Gastrocnemius medialis (tissue), 4 donors: ENCODE measurements at regions of chr3 and their contacts with region 1.

Region 1: GRCh38 chr3:172595641-172596393 is 72.6 kb upstream of the TNFSF10 start:
- DNase-seq: no peak
- ATAC-seq: peak; percentile 54 to 81
- H3K4me3 ChIP-seq: peak overlapping the region; percentile 24 to 42 (median 36)
- H3K27ac ChIP-seq: peak overlapping the region; percentile 52 to 81 (median 68)
- H3K4me1 ChIP-seq: peaks cover 13 to 14% of the 10 kb centered on the region in 2 donors
- H3K27me3 ChIP-seq: no peaks in the 10 kb centered on the region
- CTCF ChIP-seq: peak; percentile 53 to 72 (median 58)
- POLR2A ChIP-seq: no peak

Region 2: DNA sequence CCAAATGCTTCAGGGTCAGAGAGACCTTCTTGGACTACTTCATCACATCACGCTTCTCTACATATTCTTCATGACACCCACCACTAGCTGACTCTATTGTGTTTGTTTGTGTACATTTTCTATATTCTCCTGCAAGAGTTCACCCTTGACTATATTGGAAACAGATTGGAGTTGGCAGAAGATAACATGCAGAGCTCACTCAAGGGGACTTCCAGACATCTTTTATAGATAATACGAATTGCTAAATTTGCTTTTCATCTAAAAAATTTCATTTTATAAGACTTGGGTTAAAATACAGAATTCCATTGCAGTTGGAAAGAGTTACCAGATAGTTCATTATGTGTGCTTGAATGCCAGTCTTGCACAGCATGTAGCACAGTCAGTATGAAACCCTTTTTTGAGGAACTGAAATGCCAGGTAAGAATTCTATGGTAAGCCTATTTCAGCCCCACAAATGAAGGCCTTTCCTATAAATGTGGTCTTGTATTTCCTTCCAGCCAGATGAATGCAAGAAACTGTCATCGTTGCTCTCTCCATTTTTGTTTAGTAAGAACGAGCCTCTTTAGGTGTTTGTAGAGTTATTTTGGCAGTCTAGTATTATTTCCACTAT is 325.2 kb before region 1 on chr3:
- in situ Hi-C with region 1: no loop called
- intact Hi-C with region 1: no loop called
- DNase-seq: no peak
- ATAC-seq: no peak
- H3K4me3 ChIP-seq: no peak overlapping the region
- H3K27ac ChIP-seq: no peak overlapping the region
- H3K4me1 ChIP-seq: peaks cover 32% of the 10 kb centered on the region in 2 donors
- H3K27me3 ChIP-seq: no peaks in the 10 kb centered on the region
- CTCF ChIP-seq: no peak
- POLR2A ChIP-seq: no peak

Region 3: GRCh38 chr3:172376881-172377280 is 218.9 kb before region 1 on chr3:
- in situ Hi-C with region 1: no loop called
- intact Hi-C with region 1: no loop called
- DNase-seq: no peak
- ATAC-seq: no peak
- H3K4me3 ChIP-seq: no peak overlapping the region
- H3K27ac ChIP-seq: no peak overlapping the region
- H3K4me1 ChIP-seq: peaks cover 7 to 14% of the 10 kb centered on the region in 2 donors
- H3K27me3 ChIP-seq: no peaks in the 10 kb centered on the region
- CTCF ChIP-seq: no peak
- POLR2A ChIP-seq: no peak

Region 4: GRCh38 chr3:172501560-172501959 is 94.3 kb before region 1 on chr3:
- in situ Hi-C with region 1: loop called in 2 of 4 experiments (anchors 5 kb)
- intact Hi-C with region 1: no loop called
- DNase-seq: no peak
- ATAC-seq: no peak
- H3K4me3 ChIP-seq: no peak overlapping the region
- H3K27ac ChIP-seq: no peak overlapping the region
- H3K4me1 ChIP-seq: no peaks in the 10 kb centered on the region
- H3K27me3 ChIP-seq: no peaks in the 10 kb centered on the region
- CTCF ChIP-seq: no peak
- POLR2A ChIP-seq: no peak

Region 5: DNA sequence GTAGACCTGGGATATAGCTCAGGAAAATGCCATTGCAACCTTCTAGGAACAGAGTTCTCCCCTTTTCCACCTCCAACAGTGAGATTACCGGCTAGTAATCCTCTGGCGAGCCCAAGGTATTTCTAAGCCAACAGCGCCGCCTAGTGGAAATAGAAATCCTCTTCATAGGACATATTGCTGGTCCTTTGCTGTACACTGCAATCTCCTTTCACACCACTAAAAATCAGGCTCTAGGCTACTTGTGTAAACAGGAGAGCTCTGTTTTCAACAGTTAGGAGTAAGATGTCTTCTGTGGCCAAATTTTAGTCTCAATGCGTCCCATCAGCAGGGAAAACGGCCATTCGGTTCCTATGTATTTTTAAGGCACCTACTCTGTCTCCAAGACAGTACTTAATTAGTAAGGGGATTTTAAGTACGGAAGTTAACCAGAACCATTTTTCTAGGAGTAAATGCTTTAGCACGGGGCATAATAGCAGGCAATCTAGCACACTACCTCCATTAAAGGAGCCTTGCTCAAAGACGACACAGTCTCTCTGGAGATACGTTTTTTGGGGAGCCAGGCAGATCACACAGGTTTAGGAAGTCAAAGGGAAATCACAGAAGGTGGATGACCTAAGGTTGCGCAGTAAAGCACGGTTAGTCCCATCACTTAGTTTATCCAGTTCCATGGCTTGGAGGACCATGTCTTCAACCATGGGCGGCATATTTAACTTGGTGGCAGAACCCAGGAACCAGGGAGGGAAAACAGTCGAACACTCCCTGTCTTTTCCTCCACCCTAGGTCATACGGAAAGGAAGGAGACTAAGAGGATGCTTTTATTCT is 71.3 kb after region 1 on chr3:
- in situ Hi-C with region 1: no loop called
- intact Hi-C with region 1: loop called (anchors 5 kb)
- DNase-seq: peak; percentile 59 to 67
- ATAC-seq: peak; percentile 95 to 97
- H3K4me3 ChIP-seq: no peak overlapping the region
- H3K27ac ChIP-seq: no peak overlapping the region
- H3K4me1 ChIP-seq: peaks cover 0 to 6% of the 10 kb centered on the region in 2 donors
- H3K27me3 ChIP-seq: no peaks in the 10 kb centered on the region
- CTCF ChIP-seq: peak; percentile 80 to 86 (median 84)
- POLR2A ChIP-seq: no peak